ENCODE measurements at regions of chr1 and their contacts with region 1.

Region 1: DNA sequence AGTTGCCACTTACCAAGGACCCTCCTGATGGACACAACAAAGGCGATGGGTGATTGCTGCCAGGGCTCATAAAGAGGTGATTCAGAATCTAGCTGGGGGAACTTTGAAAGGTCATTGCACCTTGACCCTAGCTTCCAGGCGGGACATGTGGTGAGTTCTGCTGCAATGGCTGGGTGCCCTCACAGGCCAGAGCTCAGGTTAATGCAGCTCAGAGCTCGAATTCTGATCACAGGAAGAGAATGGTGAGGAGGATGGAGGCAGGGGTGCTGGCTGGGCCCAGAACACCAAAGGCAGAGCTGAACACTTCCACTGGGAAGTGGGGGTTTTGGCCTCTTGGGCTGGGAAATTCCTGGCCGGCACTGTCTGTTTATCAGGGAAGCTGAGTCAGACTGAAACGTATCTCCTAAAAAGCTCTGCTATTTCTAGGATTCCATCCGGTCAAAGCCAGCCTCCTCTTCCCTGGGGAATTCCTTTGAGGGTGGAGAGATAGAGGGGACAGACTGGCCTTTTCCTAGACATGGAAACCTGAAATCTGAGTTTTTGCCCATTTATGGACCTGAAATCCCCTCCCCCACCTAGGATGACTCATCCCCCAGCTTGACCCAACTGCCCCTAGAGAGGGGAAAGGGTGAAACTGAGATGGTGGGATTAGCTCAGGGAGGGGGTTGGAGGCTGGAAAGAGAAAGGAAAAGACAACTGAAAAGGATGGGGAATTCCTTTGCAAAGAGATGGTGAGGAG is 27.2 kb downstream of the NUAK2 start:
- DNase-seq: no peak
- H3K4me3 Mint-ChIP-seq: no peak overlapping the region
- H3K27ac Mint-ChIP-seq: no peak overlapping the region
- H3K4me1 Mint-ChIP-seq: peaks cover 38% of the 10 kb centered on the region
- H3K27me3 Mint-ChIP-seq: no peaks in the 10 kb centered on the region

Region 2: DNA sequence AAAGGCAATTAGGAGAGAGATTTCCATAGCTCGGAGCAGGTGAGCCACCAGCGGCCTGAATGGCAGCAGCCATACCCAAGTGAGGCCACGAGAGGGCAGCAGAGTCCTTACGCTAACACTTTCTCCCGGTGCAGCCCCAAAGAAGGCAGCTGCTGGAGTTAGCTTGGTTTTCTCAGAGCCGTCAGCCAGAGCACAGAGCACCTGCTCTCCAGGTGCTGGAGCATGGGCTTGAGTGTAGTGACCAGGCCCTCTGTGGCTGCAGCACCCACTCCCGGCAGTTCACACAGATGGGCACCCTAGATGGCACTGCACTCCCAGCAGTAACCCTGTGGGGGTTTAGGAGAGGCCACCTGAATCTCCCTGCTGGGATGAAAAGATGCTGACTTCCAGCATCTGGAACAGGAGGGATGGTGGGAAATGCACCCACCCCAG is 20.8 kb before region 1 on chr1:
- CTCF ChIA-PET with region 1: interaction called, 93 read pairs
- POLR2A ChIA-PET with region 1: no interaction called
- intact Hi-C with region 1: no loop called
- DNase-seq: peak; percentile 91
- H3K4me3 Mint-ChIP-seq: no peak overlapping the region
- H3K27ac Mint-ChIP-seq: no peak overlapping the region
- H3K4me1 Mint-ChIP-seq: peaks cover 30% of the 10 kb centered on the region
- H3K27me3 Mint-ChIP-seq: no peaks in the 10 kb centered on the region